Lower leg skin (tissue), 4 donors: ENCODE measurements at regions of chr7 and their contacts with region 1.

Region 1: DNA sequence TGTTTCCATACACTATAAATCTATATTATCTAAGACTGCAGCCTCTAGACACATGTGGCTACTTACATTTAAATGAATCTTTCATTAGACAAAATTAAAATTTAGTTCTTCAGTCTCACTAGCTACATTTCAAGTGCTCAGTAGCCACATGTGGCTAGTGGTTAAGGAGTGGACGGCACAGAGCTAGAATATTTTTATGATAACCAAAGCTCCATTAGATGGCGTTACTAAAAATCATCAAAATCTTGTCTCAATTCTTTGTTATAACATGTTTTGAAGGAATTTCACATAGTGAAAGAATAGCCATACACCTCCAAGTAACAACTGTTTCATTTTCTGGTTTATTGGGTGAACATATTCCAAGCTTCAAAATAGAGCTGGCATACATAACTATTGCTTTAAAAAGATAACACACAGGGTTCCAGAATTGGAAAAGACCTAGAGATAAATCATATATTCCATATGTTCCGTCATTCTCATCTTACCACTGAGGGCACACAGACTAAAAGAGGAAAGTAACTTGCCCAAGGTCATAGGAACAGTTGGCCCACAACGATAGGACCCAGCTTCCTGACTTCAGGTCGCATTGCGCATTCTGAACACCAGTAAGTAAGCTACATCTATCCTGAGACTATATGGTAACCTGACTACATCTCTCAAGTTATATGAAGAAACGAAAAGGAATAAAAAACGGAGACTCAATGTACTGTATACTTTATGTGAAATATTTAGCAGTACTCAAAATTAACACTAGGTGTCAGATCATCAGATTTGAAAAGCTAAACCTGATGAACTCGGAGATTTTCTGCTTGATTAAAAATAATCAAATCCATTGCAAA is 66.6 kb downstream of the CAV1 start:
- DNase-seq: no peak
- H3K4me3 ChIP-seq: no peak overlapping the region
- CTCF ChIP-seq: no peak
- POLR2A ChIP-seq: no peak

Region 2: GRCh38 chr7:116809636-116810266 is 218.3 kb after region 1 on chr7:
- intact Hi-C with region 1: loop called (anchors 2 kb)
- DNase-seq: no peak
- H3K4me3 ChIP-seq: no peak overlapping the region
- CTCF ChIP-seq: peak in 1 of 3 donors; percentile 64
- POLR2A ChIP-seq: no peak